ENCODE measurements at regions of chr2 and their contacts with region 1.

Region 1: GRCh38 chr2:36785179-36785795 is 88.8 kb downstream of the VIT start:
- DNase-seq: peak; percentile 79
- H3K4me3 Mint-ChIP-seq: no peak overlapping the region
- H3K27ac Mint-ChIP-seq: no peak overlapping the region
- H3K4me1 Mint-ChIP-seq: peaks cover 2% of the 10 kb centered on the region
- H3K27me3 Mint-ChIP-seq: peaks cover 14% of the 10 kb centered on the region

Region 2: DNA sequence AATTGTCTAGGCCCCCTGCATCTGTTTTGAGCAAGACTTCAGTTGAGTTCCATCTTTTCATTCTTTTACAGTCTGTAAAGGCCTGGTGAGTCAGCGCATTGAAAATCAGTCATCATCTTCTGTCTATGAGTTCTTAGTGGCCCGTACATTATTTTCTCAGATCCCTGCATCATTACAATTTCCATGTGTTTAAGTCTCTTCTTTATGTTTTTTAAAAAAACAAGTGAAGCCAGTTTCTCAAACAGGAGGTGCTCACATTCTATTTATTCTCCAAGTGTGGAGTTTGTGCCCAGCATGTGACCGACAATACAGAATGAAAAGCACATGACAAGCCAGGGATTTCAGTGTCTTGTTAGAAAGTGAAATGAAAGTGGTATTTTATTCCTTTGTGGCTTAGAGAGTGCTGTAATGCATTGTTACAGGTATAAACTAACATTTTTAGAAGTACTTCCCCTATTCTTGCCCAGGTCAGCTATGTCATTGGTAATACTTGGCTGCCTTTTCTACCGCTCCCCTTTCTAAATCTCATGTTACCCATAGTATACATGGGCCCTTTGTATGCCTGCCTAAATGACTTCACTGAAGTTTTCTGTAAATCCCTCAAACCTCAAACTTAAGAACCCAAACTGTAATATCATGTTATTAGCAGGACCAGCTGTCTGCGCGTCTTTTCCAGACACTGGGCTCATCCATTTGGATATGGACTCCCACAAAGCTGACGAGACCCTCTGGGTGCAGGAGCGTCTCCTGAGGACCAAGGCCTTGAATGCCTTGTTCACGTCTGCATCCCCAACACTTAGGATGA is 254.9 kb before region 1 on chr2:
- CTCF ChIA-PET with region 1: no interaction called
- POLR2A ChIA-PET with region 1: no interaction called
- intact Hi-C with region 1: no loop called
- DNase-seq: no peak
- H3K4me3 Mint-ChIP-seq: no peak overlapping the region
- H3K27ac Mint-ChIP-seq: no peak overlapping the region
- H3K4me1 Mint-ChIP-seq: no peaks in the 10 kb centered on the region
- H3K27me3 Mint-ChIP-seq: no peaks in the 10 kb centered on the region

Region 3: DNA sequence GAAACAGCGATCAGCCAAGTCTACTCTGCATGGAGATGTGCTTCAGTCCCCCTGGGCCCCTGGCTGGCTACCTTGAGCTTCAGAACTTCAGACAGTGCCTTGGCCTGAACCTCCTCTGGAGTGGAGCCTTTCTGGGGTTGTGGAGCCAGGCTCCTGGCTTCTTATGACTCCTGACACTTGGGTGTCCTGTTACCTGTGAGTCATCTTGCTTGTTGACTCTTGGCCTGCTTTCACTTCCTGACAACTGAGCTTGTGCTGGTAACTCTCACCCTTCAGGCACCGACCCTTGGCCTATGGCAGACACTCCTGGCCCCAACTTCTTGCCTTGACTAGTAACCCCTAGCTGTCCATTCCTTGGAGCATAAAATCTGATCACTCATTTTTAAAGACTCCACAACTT is 135.3 kb before region 1 on chr2:
- CTCF ChIA-PET with region 1: no interaction called
- POLR2A ChIA-PET with region 1: no interaction called
- intact Hi-C with region 1: no loop called
- DNase-seq: peak; percentile 35
- H3K4me3 Mint-ChIP-seq: no peak overlapping the region
- H3K27ac Mint-ChIP-seq: no peak overlapping the region
- H3K4me1 Mint-ChIP-seq: no peaks in the 10 kb centered on the region
- H3K27me3 Mint-ChIP-seq: peaks cover 1% of the 10 kb centered on the region

Region 4: DNA sequence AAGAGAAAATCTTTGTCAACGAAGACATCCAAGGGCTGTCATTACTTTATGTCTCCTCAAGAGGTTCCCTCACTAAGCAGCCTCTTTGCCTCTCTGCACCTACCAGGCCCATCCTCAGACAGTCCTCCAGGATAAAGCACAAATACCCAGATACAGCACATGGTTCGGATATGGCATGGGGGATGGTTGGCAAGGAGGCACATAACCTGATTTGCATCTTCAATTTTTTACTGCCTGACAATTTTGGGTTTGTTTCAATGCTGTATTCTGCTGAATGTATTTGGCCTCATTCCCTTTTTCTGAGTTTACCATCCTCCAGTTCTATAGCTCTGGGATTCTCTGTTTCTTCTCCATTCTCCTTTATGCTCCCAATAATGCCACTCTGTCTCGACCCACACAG is 10.0 kb before region 1 on chr2:
- CTCF ChIA-PET with region 1: interaction called, 16 read pairs
- POLR2A ChIA-PET with region 1: no interaction called
- intact Hi-C with region 1: no loop called
- DNase-seq: no peak
- H3K4me3 Mint-ChIP-seq: no peak overlapping the region
- H3K27ac Mint-ChIP-seq: no peak overlapping the region
- H3K4me1 Mint-ChIP-seq: no peaks in the 10 kb centered on the region
- H3K27me3 Mint-ChIP-seq: peaks cover 2% of the 10 kb centered on the region

Region 5: DNA sequence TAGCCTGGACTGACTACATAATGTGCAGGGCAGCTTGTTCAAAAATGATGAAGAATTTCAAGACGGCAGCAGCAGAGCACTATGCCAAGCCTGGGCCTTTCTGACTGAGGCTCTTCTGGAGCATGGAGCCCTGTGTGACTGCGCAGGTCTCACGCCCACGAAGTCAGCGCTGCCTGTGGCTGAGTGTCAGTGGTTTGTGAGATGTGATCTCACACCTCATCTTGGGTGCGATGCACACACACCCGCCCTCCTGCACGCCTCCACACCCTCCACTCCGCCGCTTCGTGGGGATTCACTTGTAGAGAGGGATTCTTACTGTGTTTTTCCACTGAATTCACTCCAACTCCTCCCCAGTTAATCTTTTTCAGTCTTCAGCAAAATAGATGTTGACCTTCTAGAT is 15.1 kb after region 1 on chr2:
- CTCF ChIA-PET with region 1: interaction called, 48 read pairs
- POLR2A ChIA-PET with region 1: no interaction called
- intact Hi-C with region 1: loop called (anchors 1 kb)
- DNase-seq: peak; percentile 87
- H3K4me3 Mint-ChIP-seq: peak overlapping the region; percentile 9
- H3K27ac Mint-ChIP-seq: peak overlapping the region; percentile 53
- H3K4me1 Mint-ChIP-seq: peaks cover 11% of the 10 kb centered on the region
- H3K27me3 Mint-ChIP-seq: peaks cover 33% of the 10 kb centered on the region

Region 6: DNA sequence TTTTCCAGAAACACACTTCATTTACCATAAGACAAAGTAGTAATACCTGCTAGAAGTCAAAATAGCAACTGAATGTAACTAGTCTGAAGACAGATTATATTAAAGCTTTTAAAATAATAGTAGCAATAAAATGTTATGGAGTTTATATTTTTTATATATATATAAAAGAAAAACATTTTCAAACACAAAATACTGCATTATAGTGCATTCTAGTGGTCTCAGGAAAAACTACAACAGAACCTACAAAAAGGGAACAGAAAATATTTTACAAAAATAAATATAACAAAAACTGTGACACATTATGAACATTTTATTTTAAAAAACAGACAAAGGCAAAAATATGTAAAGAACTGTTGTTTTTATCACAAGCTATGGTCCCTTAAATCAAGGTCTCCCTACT is 133.0 kb after region 1 on chr2:
- CTCF ChIA-PET with region 1: interaction called, 12 read pairs
- POLR2A ChIA-PET with region 1: no interaction called
- intact Hi-C with region 1: loop called (anchors 1 kb)
- DNase-seq: no peak
- H3K4me3 Mint-ChIP-seq: no peak overlapping the region
- H3K27ac Mint-ChIP-seq: no peak overlapping the region
- H3K4me1 Mint-ChIP-seq: peaks cover 13% of the 10 kb centered on the region
- H3K27me3 Mint-ChIP-seq: no peaks in the 10 kb centered on the region

Region 7: DNA sequence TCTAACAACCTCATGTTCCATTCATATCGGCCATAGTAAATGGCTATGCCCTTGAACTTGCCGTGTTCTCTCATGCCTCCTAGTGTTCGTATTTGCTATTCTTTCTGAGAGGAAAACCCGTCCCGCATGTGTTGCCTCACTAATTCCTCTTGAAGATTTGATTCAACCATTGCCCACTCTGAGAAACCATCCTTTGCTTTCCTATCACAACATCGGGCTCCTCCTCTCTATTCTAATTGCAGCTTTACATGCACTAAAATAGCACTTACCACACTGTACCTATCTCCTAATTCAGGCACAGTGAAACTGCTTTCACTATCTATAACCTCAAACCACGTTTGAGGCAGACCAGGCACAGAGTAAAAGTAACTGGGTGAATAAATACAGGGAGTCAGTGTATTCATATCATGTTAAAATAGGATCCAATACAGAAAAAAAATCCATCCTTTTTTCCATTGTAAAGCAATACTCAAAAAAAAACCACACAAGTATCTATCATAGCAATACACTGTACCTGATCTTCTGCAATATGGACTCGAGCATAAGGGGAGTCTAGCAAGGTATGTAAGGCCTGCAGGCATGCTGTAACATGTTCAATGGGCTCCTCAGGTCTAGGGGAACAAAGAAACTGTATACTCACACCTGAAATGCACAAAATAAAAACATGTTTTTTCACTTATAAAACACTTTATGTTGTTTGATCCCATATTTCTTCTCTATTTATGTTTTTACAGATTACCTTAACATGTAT is 220.0 kb after region 1 on chr2:
- CTCF ChIA-PET with region 1: interaction called, 8 read pairs
- POLR2A ChIA-PET with region 1: no interaction called
- intact Hi-C with region 1: loop called (anchors 1 kb)
- DNase-seq: peak; percentile 27
- H3K4me3 Mint-ChIP-seq: peak overlapping the region; percentile 34
- H3K27ac Mint-ChIP-seq: peak overlapping the region; percentile 30
- H3K4me1 Mint-ChIP-seq: peaks cover 13% of the 10 kb centered on the region
- H3K27me3 Mint-ChIP-seq: no peaks in the 10 kb centered on the region

Measured in activated CD4-positive, alpha-beta memory T cell treated with anti-CD3 and anti-CD28 coated beads for 36 hours (primary cell).